ENCODE measurements at regions of chr3 and their contacts with region 1.

Region 1: GRCh38 chr3:69200384-69201068 is 78.1 kb upstream of the LMOD3 start:
- DNase-seq: peak; percentile 36
- H3K4me3 Mint-ChIP-seq: peak overlapping the region; percentile 92
- H3K27ac Mint-ChIP-seq: peak overlapping the region; percentile 92
- H3K4me1 Mint-ChIP-seq: peaks cover 79% of the 10 kb centered on the region
- H3K27me3 Mint-ChIP-seq: no peaks in the 10 kb centered on the region

Region 2: GRCh38 chr3:68996356-68996995 is 204.1 kb before region 1 on chr3:
- intact Hi-C with region 1: no loop called
- DNase-seq: no peak
- H3K4me3 Mint-ChIP-seq: no peak overlapping the region
- H3K27ac Mint-ChIP-seq: no peak overlapping the region
- H3K4me1 Mint-ChIP-seq: peaks cover 3% of the 10 kb centered on the region
- H3K27me3 Mint-ChIP-seq: no peaks in the 10 kb centered on the region

Region 3: GRCh38 chr3:69181592-69182211 is 18.8 kb before region 1 on chr3:
- intact Hi-C with region 1: loop called (anchors 1 kb)
- DNase-seq: no peak
- H3K4me3 Mint-ChIP-seq: no peak overlapping the region
- H3K27ac Mint-ChIP-seq: peak overlapping the region; percentile 32
- H3K4me1 Mint-ChIP-seq: peaks cover 42% of the 10 kb centered on the region
- H3K27me3 Mint-ChIP-seq: no peaks in the 10 kb centered on the region

Region 4: DNA sequence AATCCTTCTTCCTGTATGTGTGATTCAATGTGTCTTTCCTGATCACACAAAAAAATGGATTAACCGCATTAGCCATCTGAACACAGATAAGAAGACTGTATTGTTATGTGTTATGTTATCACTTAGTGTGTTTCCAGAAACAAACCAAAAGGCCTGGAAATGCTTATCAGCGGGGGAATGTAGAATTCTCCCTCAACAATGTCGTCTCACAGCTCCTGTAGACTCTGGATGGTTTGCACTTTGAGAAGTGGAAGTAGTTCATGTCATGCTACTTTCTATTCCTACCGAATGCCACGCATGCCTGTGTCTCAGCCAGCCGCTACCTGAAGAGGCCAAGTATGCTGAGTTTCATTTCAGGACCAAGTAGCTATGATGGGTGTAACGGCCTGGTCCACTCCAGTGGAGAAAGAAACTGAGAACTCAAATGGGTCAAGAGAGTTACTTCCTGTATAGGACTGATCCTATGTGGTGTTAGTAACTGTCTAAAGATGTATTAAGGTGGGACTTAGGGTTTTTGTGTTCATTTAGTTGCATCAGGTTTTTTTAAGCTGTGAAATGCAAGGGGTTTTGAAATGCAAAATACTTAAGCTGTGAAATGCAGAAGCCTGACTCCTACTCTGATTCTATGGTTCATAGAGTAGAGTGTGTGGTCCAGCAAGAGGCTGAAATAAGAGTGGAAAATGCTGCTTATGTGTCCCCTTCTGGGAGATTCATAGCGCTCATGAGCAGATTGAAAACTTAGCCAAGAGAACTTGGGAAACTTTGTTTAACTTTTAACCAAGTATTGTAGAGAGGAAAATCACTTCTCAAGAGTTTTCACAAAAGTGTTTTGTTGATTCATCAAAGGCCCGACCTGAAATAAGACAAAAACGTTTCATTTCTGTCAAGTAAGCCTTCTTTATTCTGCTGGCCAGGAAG is 40.4 kb after region 1 on chr3:
- intact Hi-C with region 1: loop called (anchors 5 kb)
- DNase-seq: no peak
- H3K4me3 Mint-ChIP-seq: no peak overlapping the region
- H3K27ac Mint-ChIP-seq: no peak overlapping the region
- H3K4me1 Mint-ChIP-seq: peaks cover 27% of the 10 kb centered on the region
- H3K27me3 Mint-ChIP-seq: no peaks in the 10 kb centered on the region

Region 5: GRCh38 chr3:69282181-69282580 is 81.7 kb after region 1 on chr3:
- intact Hi-C with region 1: loop called (anchors 1 kb)
- DNase-seq: peak; percentile 12
- H3K4me3 Mint-ChIP-seq: peak overlapping the region; percentile 19
- H3K27ac Mint-ChIP-seq: peak overlapping the region; percentile 84
- H3K4me1 Mint-ChIP-seq: peaks cover 45% of the 10 kb centered on the region
- H3K27me3 Mint-ChIP-seq: no peaks in the 10 kb centered on the region

Region 6: GRCh38 chr3:69433969-69434325 is 233.4 kb after region 1 on chr3:
- intact Hi-C with region 1: loop called (anchors 1 kb)
- DNase-seq: no peak
- H3K4me3 Mint-ChIP-seq: no peak overlapping the region
- H3K27ac Mint-ChIP-seq: peak overlapping the region; percentile 54
- H3K4me1 Mint-ChIP-seq: peaks cover 51% of the 10 kb centered on the region
- H3K27me3 Mint-ChIP-seq: no peaks in the 10 kb centered on the region

Region 7: GRCh38 chr3:69855436-69856162 is 655.1 kb after region 1 on chr3:
- intact Hi-C with region 1: no loop called
- DNase-seq: no peak
- H3K4me3 Mint-ChIP-seq: no peak overlapping the region
- H3K27ac Mint-ChIP-seq: no peak overlapping the region
- H3K4me1 Mint-ChIP-seq: no peaks in the 10 kb centered on the region
- H3K27me3 Mint-ChIP-seq: no peaks in the 10 kb centered on the region

Region 8: DNA sequence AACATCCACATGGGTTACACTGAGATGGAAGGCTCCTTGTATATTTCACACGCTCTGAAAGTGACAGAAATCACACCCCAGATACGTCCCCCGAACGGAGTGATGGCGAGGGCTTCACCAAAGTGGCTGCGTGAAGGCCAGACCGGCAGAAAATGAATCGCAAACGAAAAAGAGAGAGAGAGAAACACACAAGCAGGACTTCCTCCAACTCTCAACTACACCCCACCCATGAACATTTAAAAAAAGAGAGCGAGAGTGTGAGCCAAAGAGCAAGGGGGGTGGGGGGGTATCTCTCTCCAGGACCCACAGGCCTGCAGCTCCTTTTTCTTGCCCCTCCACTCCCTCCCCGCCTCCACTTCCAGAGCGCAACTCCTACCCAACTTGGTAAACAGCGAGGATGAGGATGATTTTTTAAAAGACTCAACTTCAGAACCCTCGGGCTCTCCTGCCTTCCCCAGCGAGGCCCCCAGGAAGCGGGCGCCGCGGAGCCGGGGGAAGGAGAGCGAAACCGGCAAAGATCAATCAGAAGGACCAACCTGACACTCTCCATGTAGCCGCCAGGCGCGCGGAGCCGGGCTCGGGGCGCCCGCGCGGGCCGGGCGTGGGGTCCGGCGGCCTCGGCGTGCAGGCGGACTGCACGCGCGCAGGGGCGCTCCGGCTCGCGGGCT is 1863.9 kb after region 1 on chr3:
- intact Hi-C with region 1: loop called (anchors 10 kb)
- DNase-seq: peak; percentile 59
- H3K4me3 Mint-ChIP-seq: no peak overlapping the region
- H3K27ac Mint-ChIP-seq: no peak overlapping the region
- H3K4me1 Mint-ChIP-seq: peaks cover 39% of the 10 kb centered on the region
- H3K27me3 Mint-ChIP-seq: no peaks in the 10 kb centered on the region